Activated CD8-positive, alpha-beta T cell treated with anti-CD3 and anti-CD28 coated beads, Interleukin-2, amount 10 ng/mL, durations not matched to agents 7 days and 5 days (primary cell): ENCODE measurements at regions of chr14 and their contacts with region 1.

Region 1: DNA sequence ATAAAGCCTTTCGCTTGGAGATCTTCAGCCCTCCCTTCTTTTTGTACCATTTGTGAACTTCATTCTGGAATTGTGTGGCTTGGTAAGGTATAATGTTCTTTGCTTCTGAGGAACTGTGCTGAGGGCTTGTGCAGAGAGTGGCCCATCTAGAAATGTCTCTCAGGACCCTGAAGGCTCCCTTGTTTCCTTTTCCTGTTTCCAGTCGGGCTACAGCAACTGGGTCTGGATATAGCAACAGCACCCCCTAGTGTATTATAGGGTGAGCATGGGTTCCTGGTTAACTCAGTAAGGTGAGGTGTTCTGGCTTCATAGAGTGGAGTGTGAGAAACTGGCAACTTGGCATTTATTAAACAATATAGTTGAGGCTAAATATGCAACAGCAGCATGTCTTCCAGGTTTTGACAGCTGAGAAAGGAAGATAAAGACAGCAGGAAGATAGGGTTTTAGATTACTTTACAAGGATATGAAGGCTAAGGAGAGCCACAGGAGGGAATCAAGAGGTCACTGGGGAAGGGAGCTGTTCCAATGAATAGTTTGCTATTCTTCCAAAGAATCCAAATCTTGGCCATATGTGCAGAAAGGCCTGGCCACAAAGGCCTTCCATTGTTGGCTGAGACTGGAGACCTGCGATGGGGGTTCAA is 49.1 kb upstream of the RNU6-8 start:
- DNase-seq: peak; percentile 69
- ATAC-seq: peak; percentile 91
- H3K4me3 Mint-ChIP-seq: no peak overlapping the region
- H3K27ac Mint-ChIP-seq: no peak overlapping the region
- H3K4me1 Mint-ChIP-seq: no peaks in the 10 kb centered on the region
- H3K27me3 Mint-ChIP-seq: no peaks in the 10 kb centered on the region

Region 2: DNA sequence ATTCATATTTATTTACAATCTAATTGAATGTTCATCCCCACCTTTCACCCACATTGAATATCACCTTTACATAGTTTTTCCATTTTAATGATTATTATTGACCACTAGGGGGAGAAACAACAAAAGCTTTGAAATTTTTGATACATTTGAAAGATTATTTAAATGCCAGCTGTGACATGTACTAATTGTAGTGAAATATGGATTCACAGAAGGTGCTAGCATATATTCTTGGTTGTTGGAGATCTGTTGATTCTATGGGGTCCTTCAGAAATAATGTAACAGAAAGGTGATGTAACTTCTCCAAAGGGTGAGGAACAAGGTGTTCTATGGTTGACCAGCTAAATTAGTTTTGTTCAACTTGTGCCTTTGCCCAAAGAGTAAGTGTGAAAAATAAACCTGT is 741.9 kb before region 1 on chr14:
- CTCF ChIA-PET with region 1: interaction called, 18 read pairs
- POLR2A ChIA-PET with region 1: no interaction called
- DNase-seq: no peak
- ATAC-seq: no peak
- H3K4me3 Mint-ChIP-seq: no peak overlapping the region
- H3K27ac Mint-ChIP-seq: no peak overlapping the region
- H3K4me1 Mint-ChIP-seq: no peaks in the 10 kb centered on the region
- H3K27me3 Mint-ChIP-seq: peaks cover 5% of the 10 kb centered on the region

Region 3: DNA sequence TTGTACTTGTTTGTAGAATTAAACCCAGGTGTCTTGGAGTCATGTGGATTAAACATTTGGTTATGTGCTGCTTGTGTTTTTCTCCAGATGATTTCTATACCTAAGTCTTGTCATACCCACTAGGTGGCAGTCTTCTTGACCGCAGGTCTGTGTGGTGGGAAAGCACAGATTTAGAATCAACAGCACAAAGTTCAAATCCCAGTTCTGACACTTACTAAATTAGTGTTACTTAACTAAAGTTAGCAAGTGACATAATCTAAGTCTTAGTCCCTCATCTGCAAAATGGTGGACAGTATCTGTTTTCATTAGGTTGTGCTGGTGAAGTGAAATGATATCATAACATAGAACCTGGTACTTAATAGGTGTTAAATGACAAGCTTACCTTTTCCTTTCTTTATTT is 326.0 kb before region 1 on chr14:
- CTCF ChIA-PET with region 1: interaction called, 66 read pairs
- POLR2A ChIA-PET with region 1: no interaction called
- DNase-seq: peak; percentile 34
- ATAC-seq: no peak
- H3K4me3 Mint-ChIP-seq: no peak overlapping the region
- H3K27ac Mint-ChIP-seq: no peak overlapping the region
- H3K4me1 Mint-ChIP-seq: no peaks in the 10 kb centered on the region
- H3K27me3 Mint-ChIP-seq: peaks cover 2% of the 10 kb centered on the region

Region 4: DNA sequence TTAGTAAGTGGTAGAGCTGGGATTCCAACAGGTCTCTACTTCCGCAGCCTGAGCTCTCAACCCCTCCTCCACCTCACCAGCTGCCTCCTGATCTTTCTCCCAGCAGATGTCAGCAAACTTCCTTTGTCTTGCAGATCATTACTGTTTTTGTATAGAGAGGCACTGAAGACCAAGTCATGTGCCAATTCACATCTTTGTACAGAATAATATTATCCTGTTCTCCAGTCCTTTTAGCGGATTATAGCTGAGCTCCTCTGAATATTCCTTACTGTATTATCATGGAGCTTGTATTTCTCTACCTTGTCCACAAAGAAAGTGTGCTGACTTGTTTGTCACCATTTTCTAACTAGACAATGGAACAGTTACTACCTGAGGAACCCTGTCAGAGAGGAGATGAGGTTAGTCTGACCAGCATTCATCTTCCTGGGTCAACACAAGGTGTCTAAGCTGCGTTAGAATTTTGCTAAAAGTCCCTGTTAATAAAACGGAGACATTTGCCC is 317.3 kb before region 1 on chr14:
- CTCF ChIA-PET with region 1: interaction called, 15 read pairs
- POLR2A ChIA-PET with region 1: no interaction called
- DNase-seq: no peak
- ATAC-seq: no peak
- H3K4me3 Mint-ChIP-seq: no peak overlapping the region
- H3K27ac Mint-ChIP-seq: no peak overlapping the region
- H3K4me1 Mint-ChIP-seq: peaks cover 9% of the 10 kb centered on the region
- H3K27me3 Mint-ChIP-seq: no peaks in the 10 kb centered on the region

Region 5: DNA sequence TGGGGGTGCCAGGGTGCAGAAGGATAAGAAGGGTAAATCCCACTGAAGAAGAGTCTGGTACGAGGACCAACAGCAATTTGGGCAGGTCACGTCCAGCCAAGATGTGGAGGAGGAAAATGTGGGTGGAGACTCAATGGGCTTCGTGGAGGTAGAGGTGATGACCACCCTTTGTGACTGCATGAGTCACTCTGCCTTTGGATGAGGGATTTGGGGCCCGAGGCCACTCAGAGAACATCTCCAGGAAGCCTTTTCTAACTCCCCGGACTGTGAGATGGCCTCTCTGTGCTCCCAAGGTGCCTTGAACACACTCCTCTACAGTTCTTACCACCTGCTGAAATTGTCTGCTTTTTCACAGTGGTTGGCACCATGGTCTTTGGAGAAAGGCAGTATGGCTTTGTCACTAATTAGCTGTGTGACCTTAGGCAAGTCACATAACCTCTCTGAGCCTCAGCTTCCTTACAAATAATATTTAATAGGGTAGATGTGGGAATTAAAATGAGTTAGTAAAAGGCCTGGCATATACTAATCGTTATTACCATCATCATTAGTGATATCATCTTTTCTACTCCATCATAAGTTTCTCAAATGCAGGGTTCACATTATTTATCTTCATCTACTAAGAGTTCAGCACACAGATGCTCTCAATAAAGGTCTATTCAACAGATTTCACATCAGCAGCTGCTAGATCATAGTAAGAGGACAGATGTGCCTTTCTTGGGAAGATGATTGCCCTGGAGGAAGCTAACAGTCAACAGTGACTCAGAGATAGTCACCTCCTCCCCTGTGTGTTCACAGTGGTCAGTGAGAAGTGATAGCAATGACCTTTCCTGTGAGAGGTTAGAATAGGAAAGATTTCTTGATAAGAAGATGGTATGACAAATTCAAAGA is 241.9 kb before region 1 on chr14:
- CTCF ChIA-PET with region 1: no interaction called
- POLR2A ChIA-PET with region 1: no interaction called
- DNase-seq: no peak
- ATAC-seq: no peak
- H3K4me3 Mint-ChIP-seq: no peak overlapping the region
- H3K27ac Mint-ChIP-seq: no peak overlapping the region
- H3K4me1 Mint-ChIP-seq: no peaks in the 10 kb centered on the region
- H3K27me3 Mint-ChIP-seq: no peaks in the 10 kb centered on the region

Region 6: DNA sequence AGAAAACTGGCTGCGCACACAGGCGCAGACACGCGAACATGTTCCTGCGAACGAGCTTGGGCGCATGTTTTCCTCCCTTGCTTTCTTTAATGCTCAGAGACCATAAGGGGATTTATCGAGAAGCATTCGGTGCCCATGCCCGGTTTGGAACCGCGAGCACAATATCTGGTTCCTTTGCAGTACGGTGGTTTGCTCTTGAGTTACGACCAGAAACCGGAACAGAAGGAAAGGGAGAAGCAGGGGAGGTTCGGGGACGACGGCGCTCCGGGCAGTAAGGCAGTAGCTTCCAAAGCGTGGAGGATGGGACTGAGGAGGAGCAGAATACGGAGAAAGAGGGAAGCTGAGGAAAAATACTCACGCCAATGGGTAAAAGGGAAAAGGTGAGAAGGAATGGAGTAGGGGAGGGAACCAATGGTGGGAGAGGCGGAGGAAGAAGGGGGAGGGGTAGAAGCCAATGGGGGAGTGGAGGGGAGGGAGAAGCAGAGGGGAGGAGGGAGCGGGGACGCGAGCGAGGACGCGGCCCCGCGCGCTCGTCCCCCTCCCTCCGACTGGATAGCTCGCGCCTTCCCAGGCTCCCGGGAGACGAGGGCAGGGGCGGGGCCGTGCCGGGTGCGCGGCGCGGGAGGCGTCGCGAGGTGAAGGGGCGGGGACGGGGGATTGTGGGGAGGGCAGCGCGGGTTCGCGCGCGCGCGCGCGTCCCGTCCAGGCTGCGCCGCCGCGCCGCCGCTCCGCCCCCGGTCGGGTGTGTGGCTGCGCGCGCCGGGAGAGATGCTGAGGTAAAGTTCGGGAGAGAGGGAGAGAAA is 175.7 kb before region 1 on chr14:
- CTCF ChIA-PET with region 1: interaction called, 211 read pairs
- POLR2A ChIA-PET with region 1: no interaction called
- DNase-seq: peak; percentile 80
- ATAC-seq: peak; percentile 67
- H3K4me3 Mint-ChIP-seq: peak overlapping the region; percentile 93
- H3K27ac Mint-ChIP-seq: peak overlapping the region; percentile 83
- H3K4me1 Mint-ChIP-seq: peaks cover 31% of the 10 kb centered on the region
- H3K27me3 Mint-ChIP-seq: peaks cover 5% of the 10 kb centered on the region